ENCODE measurements at regions of chr17 and their contacts with region 1.

Region 1: GRCh38 chr17:72118335-72119076 is 2.3 kb upstream of the SOX9 start:
- DNase-seq: peak in 2 of 9 donors; percentile 6 to 26
- ATAC-seq: no peak
- H3K4me3 ChIP-seq: no peak overlapping the region
- H3K4me3 Mint-ChIP-seq: peak overlapping the region in 5 of 10 donors; percentile 14 to 51 (median 30)
- H3K27ac ChIP-seq: no peak overlapping the region
- H3K27ac Mint-ChIP-seq: peak overlapping the region in 1 of 9 donors; percentile 78
- H3K4me1 ChIP-seq: no peaks in the 10 kb centered on the region
- H3K4me1 Mint-ChIP-seq: peaks cover 8 to 26% (median 14%) of the 10 kb centered on the region in 7 donors
- H3K27me3 ChIP-seq: peaks cover 9% of the 10 kb centered on the region in 2 donors
- H3K27me3 Mint-ChIP-seq: peaks cover 68 to 85% (median 75%) of the 10 kb centered on the region in 5 donors

Region 2: DNA sequence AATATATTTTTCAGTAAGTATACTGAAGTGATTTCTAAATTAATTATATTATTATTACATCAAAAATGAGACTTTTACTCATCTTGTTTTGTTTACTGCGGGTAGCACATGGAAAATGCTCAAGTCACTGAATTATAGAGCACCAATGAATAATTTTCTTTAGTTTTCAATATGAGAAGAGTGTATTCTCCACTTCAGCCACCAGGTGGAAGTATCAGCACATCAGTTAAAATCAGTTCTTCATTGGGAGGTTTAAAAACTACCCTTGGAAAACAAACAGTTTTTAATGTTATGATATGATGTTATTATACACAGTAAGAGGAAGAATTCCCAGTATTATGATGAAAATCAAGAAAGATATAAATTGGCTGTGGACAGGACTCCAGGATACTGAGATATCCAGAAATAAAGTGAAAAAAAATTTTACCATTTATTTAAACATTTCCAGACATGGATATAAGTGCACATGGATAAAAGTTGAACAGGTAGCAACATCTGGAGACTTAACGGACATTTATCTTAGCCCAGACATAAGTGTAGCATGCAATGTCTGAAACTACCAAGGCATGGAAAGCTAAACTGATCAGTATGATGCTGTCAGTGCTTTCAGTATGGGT is 1481.9 kb before region 1 on chr17:
- CTCF ChIA-PET with region 1: no interaction called
- POLR2A ChIA-PET with region 1: no interaction called
- intact Hi-C with region 1: loop called in 1 of 2 experiments (anchors 5 kb)
- DNase-seq: peak in 3 of 9 donors; percentile 1 to 7 (median 5)
- ATAC-seq: no peak
- H3K4me3 ChIP-seq: no peak overlapping the region
- H3K4me3 Mint-ChIP-seq: no peak overlapping the region
- H3K27ac ChIP-seq: no peak overlapping the region
- H3K27ac Mint-ChIP-seq: no peak overlapping the region
- H3K4me1 ChIP-seq: no peaks in the 10 kb centered on the region
- H3K4me1 Mint-ChIP-seq: no peaks in the 10 kb centered on the region
- H3K27me3 ChIP-seq: no peaks in the 10 kb centered on the region
- H3K27me3 Mint-ChIP-seq: peaks cover 0 to 4% (median 0%) of the 10 kb centered on the region in 5 donors

Region 3: DNA sequence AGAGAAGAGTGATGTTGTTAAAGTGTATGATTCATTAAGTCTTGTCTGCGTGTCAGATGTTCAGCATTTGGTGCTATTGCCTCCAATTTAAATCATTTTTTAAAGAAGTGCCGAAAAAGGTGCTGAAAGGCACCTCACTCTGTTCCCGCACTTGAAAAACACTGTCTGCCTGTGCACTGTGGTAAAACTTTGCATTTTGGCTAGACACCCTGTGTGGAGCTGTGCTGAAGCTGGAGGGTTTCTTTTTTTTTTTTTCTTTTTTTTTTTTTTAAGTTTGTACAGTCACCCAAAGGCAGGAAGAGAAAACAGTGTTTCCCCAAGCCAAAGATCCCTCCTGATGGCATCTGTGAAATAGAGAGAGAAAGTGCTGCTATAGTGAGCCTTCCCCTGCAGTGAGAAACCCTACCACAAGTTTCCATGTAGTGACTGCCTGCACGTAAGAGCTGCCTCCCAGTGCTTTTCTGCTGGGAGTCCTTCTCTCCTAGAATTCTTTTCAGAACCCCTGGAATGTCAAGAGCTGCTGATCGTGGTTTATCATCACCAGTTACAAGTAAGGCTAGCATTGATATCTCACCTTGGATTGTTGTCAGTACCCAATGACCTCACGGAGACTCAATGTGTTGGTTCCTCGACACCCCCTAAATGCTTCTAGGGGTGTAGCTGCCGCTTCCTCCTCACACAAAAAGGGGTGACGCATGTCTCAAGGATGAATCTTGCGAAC is 113.7 kb before region 1 on chr17:
- CTCF ChIA-PET with region 1: no interaction called
- POLR2A ChIA-PET with region 1: no interaction called
- intact Hi-C with region 1: no loop called
- DNase-seq: no peak
- ATAC-seq: no peak
- H3K4me3 ChIP-seq: no peak overlapping the region
- H3K4me3 Mint-ChIP-seq: no peak overlapping the region
- H3K27ac ChIP-seq: no peak overlapping the region
- H3K27ac Mint-ChIP-seq: no peak overlapping the region
- H3K4me1 ChIP-seq: no peaks in the 10 kb centered on the region
- H3K4me1 Mint-ChIP-seq: peaks cover 0 to 2% (median 0%) of the 10 kb centered on the region in 7 donors
- H3K27me3 ChIP-seq: no peaks in the 10 kb centered on the region
- H3K27me3 Mint-ChIP-seq: peaks cover 0 to 8% (median 0%) of the 10 kb centered on the region in 5 donors

Region 4: GRCh38 chr17:72498364-72499210 is 380.1 kb after region 1 on chr17:
- CTCF ChIA-PET with region 1: no interaction called
- POLR2A ChIA-PET with region 1: no interaction called
- intact Hi-C with region 1: no loop called
- DNase-seq: no peak
- ATAC-seq: no peak
- H3K4me3 ChIP-seq: no peak overlapping the region
- H3K4me3 Mint-ChIP-seq: no peak overlapping the region
- H3K27ac ChIP-seq: no peak overlapping the region
- H3K27ac Mint-ChIP-seq: no peak overlapping the region
- H3K4me1 ChIP-seq: no peaks in the 10 kb centered on the region
- H3K4me1 Mint-ChIP-seq: peaks cover 0 to 6% (median 0%) of the 10 kb centered on the region in 7 donors
- H3K27me3 ChIP-seq: no peaks in the 10 kb centered on the region
- H3K27me3 Mint-ChIP-seq: peaks cover 0 to 33% (median 20%) of the 10 kb centered on the region in 5 donors